Dorsolateral prefrontal cortex (tissue), 120 donors: ENCODE measurements at regions of chr2 and their contacts with region 1.

Region 1: GRCh38 chr2:70994756-70995729 is at the start of gene TEX261:
- DNase-seq: peak; percentile 68 to 94 (median 86)
- H3K4me3 ChIP-seq: peak within 1 kb of the TSS; percentile 70 to 100 (median 96)
- H3K27ac ChIP-seq: peak within 1 kb of the TSS in 57 of 59 donors; percentile 6 to 92 (median 75)
- H3K27me3 ChIP-seq: no peaks in the 10 kb centered on the region
- CTCF ChIP-seq: peak; percentile 40 to 90 (median 72)
- total RNA-seq, gene TEX261: 28.4 to 60.5 (median 42.3) TPM

Region 2: GRCh38 chr2:70748002-70748784 is 246.8 kb before region 1 on chr2:
- intact Hi-C with region 1: no loop called
- DNase-seq: no peak
- H3K4me3 ChIP-seq: no peak overlapping the region
- H3K27ac ChIP-seq: no peak overlapping the region
- H3K27me3 ChIP-seq: no peaks in the 10 kb centered on the region
- CTCF ChIP-seq: no peak

Region 3: GRCh38 chr2:70828914-70829824 is 165.9 kb before region 1 on chr2:
- intact Hi-C with region 1: no loop called
- DNase-seq: no peak
- H3K4me3 ChIP-seq: no peak overlapping the region
- H3K27ac ChIP-seq: no peak overlapping the region
- H3K27me3 ChIP-seq: peaks cover 0 to 12% (median 0%) of the 10 kb centered on the region in 45 donors
- CTCF ChIP-seq: no peak

Region 4: GRCh38 chr2:71068218-71069035 is 73.4 kb after region 1 on chr2 and contains the start of gene NAGK:
- intact Hi-C with region 1: loop called (anchors 1 to 2 kb)
- DNase-seq: peak; percentile 92 to 99 (median 95)
- H3K4me3 ChIP-seq: peak within 1 kb of the TSS; percentile 55 to 100 (median 98)
- H3K27ac ChIP-seq: peak within 1 kb of the TSS; percentile 82 to 100 (median 98)
- H3K27me3 ChIP-seq: no peaks in the 10 kb centered on the region
- CTCF ChIP-seq: peak in 27 of 56 donors; percentile 3 to 54 (median 18)
- total RNA-seq, gene NAGK: 70.6 to 123 (median 96.5) TPM

Region 5: DNA sequence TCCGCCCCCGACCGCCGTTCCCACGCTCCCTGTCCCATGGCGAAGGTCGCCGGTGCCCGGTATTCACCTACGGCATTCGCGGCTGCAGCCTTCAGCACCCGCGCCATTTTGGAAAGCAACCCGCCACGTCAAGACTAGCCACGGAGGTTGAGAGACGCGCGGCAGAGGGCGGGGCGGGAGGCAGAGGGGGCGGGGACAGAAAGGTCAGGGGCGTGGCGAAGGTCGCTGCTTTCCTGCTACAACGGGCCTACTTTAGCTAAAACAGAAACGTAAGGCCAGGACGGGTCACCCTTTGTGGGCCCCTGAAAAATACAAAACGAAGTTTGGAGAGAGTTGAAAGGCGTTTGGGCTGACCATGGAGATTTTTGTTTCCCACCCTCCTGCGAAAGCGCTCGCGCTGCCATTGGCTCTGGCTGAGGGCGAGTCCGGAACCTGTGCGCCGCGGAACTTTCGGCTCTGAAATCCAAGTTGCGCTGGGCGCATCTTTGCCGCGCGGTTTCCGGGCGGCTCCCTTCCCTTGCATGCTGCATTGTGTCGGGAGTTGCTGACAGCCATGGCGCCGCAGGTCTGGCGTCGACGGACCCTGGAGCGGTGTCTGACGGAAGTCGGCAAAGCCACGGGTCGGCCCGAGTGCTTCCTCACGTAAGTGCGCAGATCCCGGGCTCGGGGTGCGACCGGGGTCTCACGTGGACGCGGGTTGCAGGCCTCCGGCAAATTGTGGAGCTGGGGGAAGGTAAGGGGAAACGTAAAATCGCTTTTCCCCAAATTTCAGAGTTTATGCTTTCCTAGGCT is 135.3 kb after region 1 on chr2 and contains the starts of genes MCEE and MPHOSPH10:
- intact Hi-C with region 1: loop called in 1 of 2 experiments (anchors 5 kb)
- DNase-seq: peak; percentile 83 to 94 (median 90)
- H3K4me3 ChIP-seq: peak within 1 kb of the TSS; percentile 59 to 99 (median 93)
- H3K27ac ChIP-seq: peak within 1 kb of the TSS; percentile 57 to 98 (median 92)
- H3K27me3 ChIP-seq: no peaks in the 10 kb centered on the region
- CTCF ChIP-seq: peak in 24 of 56 donors; percentile 6 to 51 (median 18)
- total RNA-seq, gene MCEE: 6.9 to 20.7 (median 12.9) TPM
- total RNA-seq, gene MPHOSPH10: 19.7 to 40.3 (median 30.2) TPM